Thyroid gland (tissue), 4 donors: ENCODE measurements at regions of chr17 and their contacts with region 1.

Region 1: GRCh38 chr17:44919885-44920564 is 4.7 kb upstream of the GFAP start:
- DNase-seq: peak; percentile 92 to 93
- H3K4me3 ChIP-seq: no peak overlapping the region
- H3K27ac ChIP-seq: no peak overlapping the region
- H3K4me1 ChIP-seq: peaks cover 7 to 34% of the 10 kb centered on the region in 2 donors
- H3K27me3 ChIP-seq: no peaks in the 10 kb centered on the region
- CTCF ChIP-seq: peak; percentile 52 to 93 (median 86)
- POLR2A ChIP-seq: no peak

Region 2: DNA sequence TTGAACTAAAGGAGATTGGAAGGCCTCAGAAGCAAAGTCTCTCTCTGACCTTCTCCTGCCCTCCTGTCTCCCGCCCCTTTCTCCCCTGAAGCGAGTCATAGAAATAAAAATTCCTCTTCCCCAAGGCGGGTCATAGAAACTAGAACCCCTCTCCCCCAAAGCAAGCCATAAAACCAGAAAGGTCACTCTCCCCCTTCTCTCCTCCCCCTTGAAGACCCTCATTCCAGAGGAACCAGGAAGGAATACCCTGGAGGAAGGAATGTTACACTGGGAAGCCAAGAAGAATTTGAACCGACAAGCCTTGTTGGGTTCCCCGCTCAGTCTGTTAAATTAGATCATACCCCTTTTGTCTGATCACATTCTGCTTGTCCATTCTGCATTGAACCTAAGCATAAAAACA is 87.2 kb before region 1 on chr17:
- intact Hi-C with region 1: no loop called
- DNase-seq: no peak
- H3K4me3 ChIP-seq: no peak overlapping the region
- H3K27ac ChIP-seq: no peak overlapping the region
- H3K4me1 ChIP-seq: peaks cover 5 to 14% of the 10 kb centered on the region in 2 donors
- H3K27me3 ChIP-seq: peaks cover 20% of the 10 kb centered on the region
- CTCF ChIP-seq: no peak
- POLR2A ChIP-seq: no peak

Region 3: DNA sequence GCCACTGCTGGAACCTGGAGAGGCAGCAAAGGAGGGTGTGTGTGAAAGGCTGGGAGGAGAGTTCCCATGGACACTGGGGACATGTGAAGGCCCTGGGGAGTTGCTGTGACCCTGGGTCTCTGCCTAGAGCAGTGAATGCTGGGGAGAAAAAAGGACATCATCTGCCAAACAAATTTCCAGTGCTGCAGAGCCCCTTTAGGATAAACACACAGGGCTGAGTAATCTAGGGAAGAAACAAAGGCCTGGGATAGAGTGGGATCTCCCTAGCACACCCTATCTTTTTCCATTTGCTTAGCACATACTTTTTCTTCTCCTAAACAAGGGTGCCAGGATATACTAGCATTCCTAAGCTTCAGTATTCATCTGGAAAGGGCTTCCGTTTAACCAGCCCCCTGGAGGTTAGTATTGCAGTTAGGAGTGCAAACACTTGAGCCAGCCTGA is 75.6 kb before region 1 on chr17:
- intact Hi-C with region 1: no loop called
- DNase-seq: no peak
- H3K4me3 ChIP-seq: no peak overlapping the region
- H3K27ac ChIP-seq: no peak overlapping the region
- H3K4me1 ChIP-seq: no peaks in the 10 kb centered on the region
- H3K27me3 ChIP-seq: no peaks in the 10 kb centered on the region
- CTCF ChIP-seq: no peak
- POLR2A ChIP-seq: no peak

Region 4: GRCh38 chr17:45073414-45074070 is 153.5 kb after region 1 on chr17:
- intact Hi-C with region 1: no loop called
- DNase-seq: no peak
- H3K4me3 ChIP-seq: no peak overlapping the region
- H3K27ac ChIP-seq: peak overlapping the region in 1 of 3 donors; percentile 17
- H3K4me1 ChIP-seq: peaks cover 17 to 42% of the 10 kb centered on the region in 2 donors
- H3K27me3 ChIP-seq: no peaks in the 10 kb centered on the region
- CTCF ChIP-seq: no peak
- POLR2A ChIP-seq: no peak

Region 5: GRCh38 chr17:45098869-45099616 is 179.0 kb after region 1 on chr17:
- intact Hi-C with region 1: loop called (anchors 5 kb)
- DNase-seq: peak; percentile 94
- H3K4me3 ChIP-seq: no peak overlapping the region
- H3K27ac ChIP-seq: peak overlapping the region in 1 of 3 donors; percentile 32
- H3K4me1 ChIP-seq: peaks cover 0 to 36% of the 10 kb centered on the region in 2 donors
- H3K27me3 ChIP-seq: no peaks in the 10 kb centered on the region
- CTCF ChIP-seq: peak; percentile 89 to 95 (median 92)
- POLR2A ChIP-seq: no peak

Region 6: GRCh38 chr17:45197555-45198334 is 277.7 kb after region 1 on chr17:
- intact Hi-C with region 1: loop called (anchors 10 kb)
- DNase-seq: peak; percentile 90 to 94
- H3K4me3 ChIP-seq: no peak overlapping the region
- H3K27ac ChIP-seq: peak overlapping the region; percentile 20 to 61 (median 60)
- H3K4me1 ChIP-seq: peaks cover 0 to 13% of the 10 kb centered on the region in 2 donors
- H3K27me3 ChIP-seq: no peaks in the 10 kb centered on the region
- CTCF ChIP-seq: peak; percentile 94 to 99 (median 99)
- POLR2A ChIP-seq: no peak